Dendritic cell treated with granulocyte-macrophage colony-stimulating factor and Interleukin-4, amounts not matched to agents 40 ng/mL and 50 ng/mL, for 4 days (primary cell): ENCODE measurements at regions of chr1 and their contacts with region 1.

Region 1: GRCh38 chr1:7856345-7856744 is 3.5 kb upstream of the UTS2 start:
- H3K4me3 Mint-ChIP-seq: no peak overlapping the region
- H3K27ac Mint-ChIP-seq: no peak overlapping the region
- H3K4me1 Mint-ChIP-seq: peaks cover 14% of the 10 kb centered on the region
- H3K27me3 Mint-ChIP-seq: peaks cover 11% of the 10 kb centered on the region

Region 2: DNA sequence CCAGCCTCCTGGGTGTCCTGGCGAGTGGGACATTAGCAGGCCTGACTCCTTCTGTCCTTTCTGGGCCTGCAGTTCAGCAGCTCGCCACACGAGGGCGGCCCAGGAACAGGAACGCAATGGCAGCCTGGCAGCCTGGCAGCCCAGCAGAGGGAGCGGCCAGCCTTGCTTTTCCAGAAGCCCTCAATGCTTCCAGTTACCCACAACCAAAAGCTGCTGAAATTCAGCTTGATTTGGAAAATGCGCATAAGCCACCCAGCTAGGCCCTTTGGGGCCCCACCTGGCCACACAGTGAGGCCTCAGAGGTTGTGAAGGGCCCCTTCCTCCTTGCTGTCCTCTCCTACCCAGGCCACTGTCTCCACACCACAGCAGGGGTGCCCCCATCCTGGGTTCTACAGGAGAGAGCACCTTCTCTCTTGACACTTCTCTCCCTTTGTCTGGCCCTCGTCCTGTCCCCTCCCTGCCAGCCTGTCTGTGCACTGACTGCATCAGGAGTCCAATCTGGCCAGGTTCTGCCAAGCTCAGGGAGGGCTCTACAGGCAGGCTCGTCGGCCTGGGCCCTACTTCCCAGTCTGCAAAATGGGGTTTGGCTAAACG is 188.6 kb before region 1 on chr1:
- intact Hi-C with region 1: loop called (anchors 2 kb)
- H3K4me3 Mint-ChIP-seq: no peak overlapping the region
- H3K27ac Mint-ChIP-seq: no peak overlapping the region
- H3K4me1 Mint-ChIP-seq: peaks cover 6% of the 10 kb centered on the region
- H3K27me3 Mint-ChIP-seq: peaks cover 8% of the 10 kb centered on the region

Region 3: DNA sequence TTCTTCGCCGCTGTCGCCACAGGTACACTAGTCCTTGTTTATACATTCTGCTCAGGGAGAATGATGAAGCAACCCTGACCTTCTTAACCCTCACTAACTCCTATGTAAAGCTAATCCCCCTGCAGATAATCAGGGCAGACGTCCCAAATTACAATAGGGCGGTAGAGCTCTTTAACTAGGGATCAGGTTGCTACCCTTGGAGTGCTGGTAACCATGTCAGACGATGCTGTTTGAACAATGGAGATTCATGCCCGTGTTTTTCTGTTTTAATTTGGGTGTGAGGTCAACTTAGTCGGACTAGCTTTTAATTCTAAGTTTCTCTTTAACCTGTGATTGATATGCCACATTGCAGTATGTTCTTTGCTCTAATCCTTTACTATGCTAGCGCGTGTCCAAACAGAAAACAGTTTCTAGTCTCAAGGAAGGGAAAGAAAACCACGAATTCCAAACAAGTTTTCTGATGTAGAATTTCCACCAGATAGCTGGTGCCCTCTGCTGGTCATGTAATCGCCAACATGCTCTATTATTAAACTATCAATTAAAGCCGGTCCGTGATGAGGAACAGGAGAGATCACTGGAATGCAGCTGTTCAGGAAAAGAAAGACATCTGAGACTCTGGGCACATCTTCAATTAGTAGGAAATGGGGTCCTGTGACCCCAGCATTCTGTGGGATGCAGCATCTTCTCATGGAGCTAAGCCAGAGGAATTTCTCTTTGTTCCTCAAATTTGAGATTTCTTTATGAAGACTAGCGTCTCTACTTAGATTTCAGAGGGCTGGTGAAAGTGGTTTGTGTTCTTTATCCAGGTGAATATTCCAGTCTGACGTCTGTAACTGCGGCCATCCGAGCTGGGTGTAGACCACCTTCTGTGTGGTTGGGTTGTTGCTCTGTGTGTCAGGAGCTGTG is 103.6 kb before region 1 on chr1:
- intact Hi-C with region 1: loop called (anchors 10 kb)
- H3K4me3 Mint-ChIP-seq: peak overlapping the region; percentile 46
- H3K27ac Mint-ChIP-seq: no peak overlapping the region
- H3K4me1 Mint-ChIP-seq: peaks cover 15% of the 10 kb centered on the region
- H3K27me3 Mint-ChIP-seq: no peaks in the 10 kb centered on the region

Region 4: GRCh38 chr1:7808253-7808844 is 48.0 kb before region 1 on chr1:
- intact Hi-C with region 1: loop called (anchors 1 kb)
- H3K4me3 Mint-ChIP-seq: no peak overlapping the region
- H3K27ac Mint-ChIP-seq: no peak overlapping the region
- H3K4me1 Mint-ChIP-seq: no peaks in the 10 kb centered on the region
- H3K27me3 Mint-ChIP-seq: peaks cover 1% of the 10 kb centered on the region

Region 5: GRCh38 chr1:7961216-7962015 is 105.1 kb after region 1 on chr1 and contains the start of gene PARK7:
- intact Hi-C with region 1: no loop called
- H3K4me3 Mint-ChIP-seq: peak within 1 kb of the TSS; percentile 96
- H3K27ac Mint-ChIP-seq: peak within 1 kb of the TSS; percentile 97
- H3K4me1 Mint-ChIP-seq: peaks cover 27% of the 10 kb centered on the region
- H3K27me3 Mint-ChIP-seq: no peaks in the 10 kb centered on the region

Region 6: DNA sequence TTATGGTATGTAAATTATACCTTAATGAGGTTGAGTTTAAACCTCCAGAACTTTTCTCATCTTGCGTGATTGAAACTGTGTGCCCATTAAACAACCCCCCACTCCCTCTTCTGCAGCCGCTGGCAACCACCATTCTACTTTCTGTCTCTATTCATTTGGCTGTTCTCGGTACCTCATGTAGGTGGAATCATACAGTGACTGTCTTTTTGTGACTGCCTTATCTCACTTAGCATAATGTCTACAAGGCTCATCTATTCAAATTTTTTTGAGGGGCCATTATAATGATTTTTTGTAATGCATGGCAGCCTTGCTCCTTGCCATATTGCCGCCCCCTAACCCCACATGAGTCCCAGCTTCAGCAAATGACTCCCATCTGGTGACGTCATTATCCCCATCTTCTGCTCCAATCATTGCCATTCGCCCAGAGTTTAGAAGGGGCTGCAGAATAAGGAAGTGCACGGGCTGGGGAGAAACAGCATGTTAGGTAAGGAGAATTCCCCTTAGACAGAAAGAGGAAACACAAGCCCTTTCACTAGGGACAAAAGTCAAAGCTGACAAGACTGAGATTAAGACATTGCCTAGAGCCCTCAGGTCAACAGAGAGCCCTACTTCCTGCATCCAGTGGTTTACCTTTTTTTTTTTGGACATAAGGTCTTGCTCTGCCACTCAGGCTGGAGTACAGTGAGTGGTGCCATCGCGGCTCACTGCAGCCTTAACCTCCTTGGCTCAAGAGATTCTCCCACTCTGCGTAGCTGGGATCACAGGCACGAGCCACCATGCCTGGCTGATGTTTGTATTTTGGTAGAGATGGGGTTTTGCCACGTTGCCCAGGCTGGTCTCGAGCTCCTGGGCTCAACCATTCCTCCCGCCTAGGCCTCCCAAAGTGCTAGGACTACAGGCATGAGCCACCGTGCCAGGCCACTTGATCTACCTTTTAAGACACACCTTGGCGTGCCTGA is 248.2 kb after region 1 on chr1:
- intact Hi-C with region 1: no loop called
- H3K4me3 Mint-ChIP-seq: no peak overlapping the region
- H3K27ac Mint-ChIP-seq: peak overlapping the region; percentile 65
- H3K4me1 Mint-ChIP-seq: peaks cover 28% of the 10 kb centered on the region
- H3K27me3 Mint-ChIP-seq: peaks cover 3% of the 10 kb centered on the region